Endothelial cell of umbilical vein (primary cell): ENCODE measurements at regions of chr11 and their contacts with region 1.

Region 1: DNA sequence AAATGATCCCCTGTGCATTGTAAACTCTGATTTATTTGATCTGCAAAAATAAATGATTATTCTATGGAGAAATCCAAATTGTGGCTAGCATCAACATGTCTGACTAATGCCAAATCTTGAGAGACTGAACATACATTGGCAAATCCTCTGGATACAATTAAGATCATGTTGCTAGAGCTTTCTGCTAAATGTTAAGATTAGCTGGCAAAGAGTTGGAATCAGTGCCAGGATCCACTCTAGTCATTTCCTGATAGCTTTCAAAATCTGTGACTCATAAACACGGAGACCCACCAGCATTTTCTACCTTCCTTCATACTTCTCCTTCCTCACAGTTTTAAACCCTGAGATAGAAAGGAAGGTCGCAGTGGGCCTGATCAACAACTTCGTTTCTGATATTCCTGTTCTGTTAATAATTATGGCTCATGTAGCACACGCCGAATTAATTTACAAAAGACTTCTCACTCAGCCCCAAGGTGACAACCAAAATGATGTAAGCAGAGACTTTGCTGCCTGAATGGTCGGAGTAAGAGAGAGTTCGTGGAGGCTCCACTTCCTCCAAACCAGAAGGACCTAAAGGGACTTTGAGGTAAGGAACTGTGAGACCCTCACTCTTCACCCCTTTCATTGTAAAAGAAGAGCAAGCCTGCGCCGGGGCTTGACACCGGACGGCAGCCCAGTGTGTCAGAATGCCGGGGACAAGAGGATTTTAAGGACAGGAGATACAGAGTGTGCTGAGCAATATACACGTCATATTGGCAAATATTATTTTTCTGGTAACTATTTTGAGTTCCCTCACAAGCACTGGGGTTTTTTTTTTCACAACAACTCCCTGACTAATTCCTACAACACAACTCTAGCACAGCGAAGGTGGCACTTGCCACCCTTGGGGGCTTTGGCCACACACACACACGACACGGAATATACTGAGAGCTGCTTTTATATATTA is 42.0 kb downstream of the SERPINH1 start:
- DNase-seq: peak; percentile 92
- H3K4me3 ChIP-seq: peak overlapping the region in 1 of 3 experiments; percentile 40
- H3K27ac ChIP-seq: peak overlapping the region; percentile 88
- H3K4me1 ChIP-seq: peaks cover 24% of the 10 kb centered on the region
- H3K27me3 ChIP-seq: no peaks in the 10 kb centered on the region
- CTCF ChIP-seq: no peak
- POLR2A ChIP-seq: peak; percentile 49

Region 2: DNA sequence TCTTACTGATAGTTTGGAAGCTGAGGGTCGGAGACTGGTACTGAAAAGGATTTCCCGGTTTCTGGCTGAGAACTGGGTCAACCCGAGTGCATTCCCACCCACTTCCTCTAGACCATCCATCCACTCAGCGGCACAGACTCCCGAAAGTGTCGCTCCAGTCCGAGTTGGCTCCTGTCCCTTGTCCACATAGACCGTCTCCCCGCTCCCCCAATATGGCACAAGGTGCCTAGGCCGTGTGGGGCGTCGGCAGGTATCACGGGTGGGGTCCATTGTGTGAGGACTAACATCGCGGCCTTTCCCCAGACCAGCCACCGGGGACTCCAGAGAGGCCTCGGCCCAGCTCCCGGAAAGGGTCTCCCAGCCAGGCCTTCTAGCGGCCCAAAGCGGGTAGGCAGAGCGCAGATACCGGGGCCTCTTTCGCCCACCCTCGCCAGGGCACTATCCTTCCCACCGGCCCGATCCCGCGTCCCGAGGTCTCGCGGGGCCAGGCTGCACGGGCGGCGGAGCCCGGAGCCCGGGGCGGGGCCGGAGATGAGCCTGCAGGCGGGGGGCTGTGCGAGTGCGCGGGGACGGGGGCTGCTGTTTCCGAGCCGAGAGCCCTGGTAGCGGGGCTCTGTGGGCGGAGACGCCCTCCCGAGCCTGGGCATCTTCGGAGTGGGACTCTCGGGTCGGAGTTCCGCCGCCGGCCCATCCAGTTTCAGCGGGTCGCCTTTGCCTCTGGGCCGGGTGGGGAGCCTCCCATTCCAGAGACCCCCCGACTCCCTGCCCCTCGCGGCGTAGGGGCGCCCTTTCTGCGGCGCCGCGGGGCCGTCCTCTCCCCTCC is 21.0 kb before region 1 on chr11:
- CTCF ChIA-PET with region 1: interaction called, 7 read pairs
- POLR2A ChIA-PET with region 1: interaction called, 7 read pairs
- dilution Hi-C with region 1: no loop called
- intact Hi-C with region 1: loop called (anchors 1 kb)
- DNase-seq: peak; percentile 84
- H3K4me3 ChIP-seq: peak overlapping the region; percentile 17 to 62 (median 38)
- H3K27ac ChIP-seq: peak overlapping the region; percentile 94
- H3K4me1 ChIP-seq: peaks cover 21% of the 10 kb centered on the region
- H3K27me3 ChIP-seq: no peaks in the 10 kb centered on the region
- CTCF ChIP-seq: peak; percentile 9 to 20
- POLR2A ChIP-seq: peak; percentile 69

Region 3: DNA sequence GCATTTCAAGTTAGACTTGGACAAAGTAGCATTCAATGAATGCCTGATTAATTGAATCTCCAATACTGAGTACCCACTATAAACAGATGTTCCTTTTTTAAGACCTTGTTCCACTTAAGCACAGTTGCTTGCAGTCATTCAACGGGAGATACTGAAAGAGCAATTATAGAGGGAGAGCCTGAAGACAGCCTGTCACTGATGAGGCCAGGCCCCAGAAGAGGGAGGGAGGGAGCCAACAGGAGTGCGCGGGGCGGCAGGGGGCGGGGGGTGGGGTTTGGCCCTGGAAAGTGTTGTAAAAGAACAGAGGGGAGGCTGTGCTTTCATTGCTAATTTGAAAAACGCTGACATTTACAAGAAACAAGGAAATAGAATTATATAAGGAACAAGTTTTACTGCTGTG is 11.6 kb after region 1 on chr11:
- CTCF ChIA-PET with region 1: interaction called, 16 read pairs
- POLR2A ChIA-PET with region 1: no interaction called
- dilution Hi-C with region 1: no loop called
- intact Hi-C with region 1: no loop called
- DNase-seq: no peak
- H3K4me3 ChIP-seq: no peak overlapping the region
- H3K27ac ChIP-seq: no peak overlapping the region
- H3K4me1 ChIP-seq: peaks cover 8% of the 10 kb centered on the region
- H3K27me3 ChIP-seq: no peaks in the 10 kb centered on the region
- CTCF ChIP-seq: no peak
- POLR2A ChIP-seq: no peak

Region 4: DNA sequence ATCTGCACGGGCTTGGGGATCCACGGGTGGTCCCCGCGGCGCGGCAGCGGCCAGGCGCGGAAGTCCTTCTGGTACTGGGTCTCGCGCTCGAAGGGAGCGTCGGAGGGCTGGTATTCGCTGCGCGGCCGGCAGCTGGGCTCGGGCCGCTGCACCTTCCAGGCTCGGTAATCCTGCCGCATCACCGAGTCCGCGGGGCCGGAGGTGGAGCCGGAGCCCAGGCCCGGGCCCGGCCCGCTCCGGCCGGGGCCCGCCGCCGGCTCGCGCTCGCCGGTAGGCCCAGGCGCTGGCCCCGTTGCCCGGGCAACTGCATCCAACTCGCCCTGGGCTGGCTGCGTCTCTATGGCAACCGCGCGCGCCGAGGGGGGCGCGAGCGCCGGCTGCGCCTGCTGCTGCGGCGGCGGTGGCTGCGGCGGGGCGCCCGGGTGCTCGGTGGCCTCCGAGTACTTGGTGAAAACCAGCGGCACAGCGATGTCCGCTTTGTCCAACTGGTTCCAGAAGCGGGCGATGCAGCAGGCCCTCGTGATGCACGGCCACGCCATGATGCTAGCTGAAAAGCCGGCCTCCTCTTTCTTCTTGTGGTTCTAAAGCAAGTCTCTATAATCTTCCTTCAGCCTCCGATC is 63.9 kb after region 1 on chr11:
- CTCF ChIA-PET with region 1: no interaction called
- POLR2A ChIA-PET with region 1: no interaction called
- dilution Hi-C with region 1: no loop called
- intact Hi-C with region 1: loop called (anchors 5 kb)
- DNase-seq: peak; percentile 7
- H3K4me3 ChIP-seq: peak overlapping the region in 1 of 3 experiments; percentile 26
- H3K27ac ChIP-seq: no peak overlapping the region
- H3K4me1 ChIP-seq: peaks cover 7% of the 10 kb centered on the region
- H3K27me3 ChIP-seq: peaks cover 66 to 88% of the 10 kb centered on the region in 2 experiments
- CTCF ChIP-seq: no peak
- POLR2A ChIP-seq: no peak

Region 5: DNA sequence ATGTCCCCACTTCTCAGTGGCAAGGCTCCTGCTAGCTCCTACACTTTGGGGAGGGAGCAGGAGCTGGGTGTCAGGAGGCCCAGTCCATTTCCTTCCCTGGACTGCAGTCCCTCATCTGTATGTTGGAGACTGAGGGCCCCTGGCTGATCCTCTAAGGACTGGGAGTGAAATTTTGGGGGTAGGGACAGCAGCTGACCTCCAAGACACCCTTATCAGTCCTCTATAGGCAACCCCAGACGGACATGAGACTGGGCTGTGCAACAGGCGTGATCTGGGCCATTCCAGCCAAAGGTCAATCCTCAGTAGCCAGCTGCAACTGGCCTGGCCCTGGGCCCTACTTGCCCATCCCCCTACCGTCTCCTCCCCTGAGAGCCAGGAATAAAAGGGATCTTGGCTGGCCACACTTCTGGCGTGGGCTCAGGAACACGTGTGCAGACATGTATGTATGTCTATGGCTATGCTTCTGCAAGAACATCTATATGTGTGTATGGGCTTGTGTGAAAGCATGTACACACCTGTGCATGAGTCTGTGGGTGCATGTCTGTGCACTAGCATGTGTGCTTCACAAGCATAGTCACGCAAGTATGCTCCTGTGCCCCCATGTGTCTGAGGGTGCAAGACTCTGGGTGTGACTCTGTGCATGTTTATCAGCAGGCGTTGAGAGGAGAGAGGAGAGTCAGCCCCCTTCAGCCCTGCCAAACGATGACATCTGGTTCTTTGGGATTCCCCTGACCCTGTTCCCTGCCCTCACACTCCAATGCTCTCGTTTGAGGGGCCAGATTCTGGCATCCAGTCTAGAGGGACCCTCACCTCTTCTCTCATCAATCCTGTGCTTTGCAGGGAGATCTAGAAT is 139.9 kb after region 1 on chr11:
- CTCF ChIA-PET with region 1: no interaction called
- POLR2A ChIA-PET with region 1: no interaction called
- dilution Hi-C with region 1: no loop called
- intact Hi-C with region 1: no loop called
- DNase-seq: no peak
- H3K4me3 ChIP-seq: no peak overlapping the region
- H3K27ac ChIP-seq: no peak overlapping the region
- H3K4me1 ChIP-seq: no peaks in the 10 kb centered on the region
- H3K27me3 ChIP-seq: peaks cover 16 to 25% of the 10 kb centered on the region in 2 experiments
- CTCF ChIP-seq: no peak
- POLR2A ChIP-seq: no peak